Activated CD4-positive, alpha-beta T cell treated with anti-CD3 and anti-CD28 coated beads, Interleukin-2, amount 10 ng/mL, durations not matched to agents 24 days and 14 days (primary cell): ENCODE measurements at regions of chr1 and their contacts with region 1.

Region 1: GRCh38 chr1:168535536-168535935 is 8.3 kb downstream of the XCL2 start:
- DNase-seq: peak; percentile 82
- H3K4me3 Mint-ChIP-seq: peak overlapping the region; percentile 80
- H3K27ac Mint-ChIP-seq: peak overlapping the region; percentile 87
- H3K4me1 Mint-ChIP-seq: peaks cover 48% of the 10 kb centered on the region
- H3K27me3 Mint-ChIP-seq: peaks cover 2% of the 10 kb centered on the region

Region 2: GRCh38 chr1:168504064-168504837 is 31.3 kb before region 1 on chr1:
- intact Hi-C with region 1: loop called (anchors 2 kb)
- DNase-seq: peak; percentile 79
- H3K4me3 Mint-ChIP-seq: peak overlapping the region; percentile 9
- H3K27ac Mint-ChIP-seq: peak overlapping the region; percentile 38
- H3K4me1 Mint-ChIP-seq: peaks cover 46% of the 10 kb centered on the region
- H3K27me3 Mint-ChIP-seq: no peaks in the 10 kb centered on the region